Body of pancreas (tissue), 4 donors: ENCODE measurements at regions of chr13 and their contacts with region 1.

Region 1: DNA sequence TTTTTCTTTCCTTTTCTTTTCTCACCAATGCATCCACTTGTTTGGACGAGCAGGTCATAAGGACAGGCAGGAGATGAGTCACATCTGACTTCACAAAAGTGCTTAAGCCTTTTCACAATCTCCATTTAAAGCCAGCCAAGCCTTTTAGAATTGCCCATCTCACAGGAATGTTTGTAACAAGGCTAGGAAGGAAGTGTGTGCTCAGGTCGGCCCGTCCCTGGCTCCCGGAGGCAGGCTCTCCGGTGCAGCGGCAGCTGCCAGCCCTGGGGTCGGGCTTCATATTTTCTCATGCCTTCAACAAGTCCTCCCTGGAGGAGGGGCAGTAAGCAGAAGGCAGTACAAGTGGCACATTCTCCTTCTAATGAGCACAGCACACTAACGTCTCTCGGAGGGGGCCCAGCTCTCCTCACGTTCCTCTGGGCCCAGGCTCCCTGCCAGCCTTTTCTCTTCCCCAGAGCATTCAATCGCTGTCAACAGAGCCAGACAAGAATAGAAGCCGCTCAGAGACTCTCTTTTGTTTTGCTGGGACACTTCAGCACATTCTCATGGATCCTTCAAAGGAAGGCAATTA is 180.5 kb downstream of the COL4A1 start:
- DNase-seq: peak in 1 of 4 donors; percentile 34
- ATAC-seq: peak; percentile 81
- H3K4me3 ChIP-seq: no peak overlapping the region
- H3K27ac ChIP-seq: peak overlapping the region in 3 of 4 donors; percentile 43 to 71 (median 68)
- H3K4me1 ChIP-seq: no peaks in the 10 kb centered on the region
- H3K27me3 ChIP-seq: no peaks in the 10 kb centered on the region
- CTCF ChIP-seq: no peak
- POLR2A ChIP-seq: no peak

Region 2: DNA sequence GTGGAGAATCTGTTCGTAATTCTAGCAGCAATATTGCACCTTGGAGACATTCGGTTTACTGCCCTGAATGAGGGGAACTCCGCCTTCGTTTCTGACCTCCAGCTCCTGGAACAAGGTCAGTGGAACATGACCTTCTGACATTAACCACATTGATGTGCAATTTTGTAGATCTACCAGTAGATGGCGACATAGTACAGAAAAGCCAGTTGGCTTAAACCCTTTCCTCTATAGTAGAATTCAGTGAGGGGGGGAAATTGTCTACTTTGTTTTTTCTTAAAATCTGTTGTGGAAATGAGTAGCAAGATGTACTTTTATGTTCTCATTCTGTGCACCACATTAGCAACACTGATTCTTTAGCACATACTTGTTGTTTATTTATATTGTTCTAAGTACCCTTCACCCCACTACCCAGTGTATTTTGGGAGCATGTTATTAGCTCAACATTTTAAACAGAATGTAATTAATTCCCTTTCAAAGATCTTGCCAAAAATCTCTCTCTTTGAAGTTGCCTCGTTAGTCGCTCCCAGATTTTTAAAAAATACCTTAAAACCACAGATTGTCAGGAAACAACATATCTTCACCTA is 1164.8 kb before region 1 on chr13:
- intact Hi-C with region 1: loop called (anchors 10 kb)
- DNase-seq: no peak
- ATAC-seq: peak; percentile 66
- H3K4me3 ChIP-seq: no peak overlapping the region
- H3K27ac ChIP-seq: no peak overlapping the region
- H3K4me1 ChIP-seq: peaks cover 4% of the 10 kb centered on the region
- H3K27me3 ChIP-seq: no peaks in the 10 kb centered on the region
- CTCF ChIP-seq: peak; percentile 58 to 88 (median 80)
- POLR2A ChIP-seq: no peak